ENCODE measurements at regions of chr11 and their contacts with region 1.

Region 1: DNA sequence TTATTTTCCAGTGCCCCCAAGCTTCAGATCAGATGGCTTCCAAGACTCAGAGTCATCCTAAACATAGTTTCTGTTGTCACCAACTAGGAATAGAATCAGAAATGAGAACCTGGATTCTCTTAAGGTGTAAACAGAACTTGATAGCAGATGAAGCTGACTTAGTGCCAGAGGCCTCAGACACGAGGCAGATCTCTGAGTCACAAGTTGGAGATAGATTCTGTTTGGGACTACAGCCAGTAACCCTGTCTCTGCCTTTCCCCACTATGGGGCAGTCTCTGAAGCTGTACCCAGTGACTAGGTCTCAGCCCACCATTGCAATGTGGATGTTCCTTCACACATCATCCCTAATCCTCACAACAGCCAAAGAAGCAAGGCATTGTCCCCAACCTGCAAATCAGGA is 25.4 kb downstream of the NEU3 start:
- DNase-seq: peak; percentile 57
- H3K4me3 ChIP-seq: no peak overlapping the region
- CTCF ChIP-seq: no peak

Region 2: DNA sequence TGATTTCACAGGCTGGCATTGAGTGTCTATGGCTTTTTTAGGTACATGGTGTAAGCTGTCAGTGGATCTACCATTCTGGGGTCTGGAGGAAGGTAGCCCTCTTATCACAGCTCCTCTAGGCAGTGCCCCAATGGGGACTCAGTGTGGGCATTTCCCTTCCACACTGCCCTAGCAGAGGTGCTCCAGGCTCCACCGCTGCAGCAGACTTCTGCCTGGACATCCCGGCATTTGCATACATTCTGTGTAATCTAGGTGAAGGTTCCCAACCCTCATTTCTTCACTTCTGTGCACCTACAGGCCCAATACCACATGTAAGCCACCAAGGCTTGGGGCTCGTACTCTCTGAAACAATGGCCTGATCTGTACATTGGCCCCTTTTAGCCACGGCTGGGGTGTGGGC is 187.2 kb before region 1 on chr11:
- CTCF ChIA-PET with region 1: no interaction called
- POLR2A ChIA-PET with region 1: no interaction called
- DNase-seq: no peak
- H3K4me3 ChIP-seq: no peak overlapping the region
- CTCF ChIP-seq: no peak

Region 3: GRCh38 chr11:74980634-74981033 is 33.5 kb before region 1 on chr11:
- CTCF ChIA-PET with region 1: no interaction called
- POLR2A ChIA-PET with region 1: no interaction called
- DNase-seq: no peak
- H3K4me3 ChIP-seq: no peak overlapping the region
- CTCF ChIP-seq: no peak

Region 4: GRCh38 chr11:75002516-75002915 is 11.6 kb before region 1 on chr11:
- CTCF ChIA-PET with region 1: interaction called, 14 read pairs
- POLR2A ChIA-PET with region 1: no interaction called
- DNase-seq: no peak
- H3K4me3 ChIP-seq: no peak overlapping the region
- CTCF ChIP-seq: no peak

Region 5: GRCh38 chr11:75051043-75051442 is 36.9 kb after region 1 on chr11:
- CTCF ChIA-PET with region 1: no interaction called
- POLR2A ChIA-PET with region 1: no interaction called
- DNase-seq: no peak
- H3K4me3 ChIP-seq: no peak overlapping the region
- CTCF ChIP-seq: no peak